ENCODE measurements at regions of chr22 and their contacts with region 1.

Region 1: DNA sequence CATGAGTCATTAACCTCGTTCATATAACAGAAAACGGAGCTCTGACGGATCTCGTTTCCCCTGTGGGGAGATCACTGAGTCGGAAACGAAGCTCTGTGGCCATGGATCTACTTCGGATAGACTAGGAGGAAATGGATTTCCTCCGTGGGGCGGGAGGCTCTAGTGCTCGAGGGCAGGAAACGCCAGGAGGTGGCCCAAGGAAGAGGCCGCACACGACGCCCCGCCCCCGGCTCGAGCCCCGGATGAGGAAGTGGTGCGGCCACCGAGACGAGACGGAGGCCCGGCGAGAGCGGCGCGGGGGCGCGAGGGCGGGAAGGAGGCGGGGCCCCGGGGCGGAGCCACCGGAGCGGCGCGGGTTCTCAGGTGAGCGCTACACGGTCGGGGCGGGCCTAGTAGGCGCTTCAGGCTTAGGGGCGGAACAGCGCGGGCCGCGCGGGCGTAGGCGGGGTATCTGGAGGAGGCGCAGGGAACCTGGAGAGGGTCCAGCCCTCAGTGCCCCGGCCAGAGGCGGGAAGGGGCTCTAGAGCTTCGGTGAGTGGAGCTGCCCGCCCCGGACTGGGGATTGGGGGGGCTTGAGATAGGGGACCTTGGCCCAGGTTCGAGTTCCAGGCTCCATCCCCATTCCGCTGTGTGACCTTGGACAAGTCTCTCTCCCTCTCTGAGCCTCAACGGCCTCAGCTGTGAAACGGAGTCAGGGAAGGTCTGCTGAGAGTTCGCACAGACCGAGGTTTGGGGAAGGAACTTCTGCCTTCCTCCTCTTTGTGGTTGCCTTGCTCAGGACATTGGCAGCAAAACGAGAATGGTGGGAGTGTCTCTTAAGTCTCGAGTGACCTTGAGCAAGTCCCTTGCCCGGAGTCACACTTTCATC is at the start of gene DEPDC5:
- DNase-seq: peak; percentile 99

Region 2: GRCh38 chr22:31676700-31677099 is 77.2 kb before region 1 on chr22:
- CTCF ChIA-PET with region 1: interaction called, 3 read pairs
- POLR2A ChIA-PET with region 1: interaction called, 20 read pairs
- DNase-seq: no peak

Region 3: DNA sequence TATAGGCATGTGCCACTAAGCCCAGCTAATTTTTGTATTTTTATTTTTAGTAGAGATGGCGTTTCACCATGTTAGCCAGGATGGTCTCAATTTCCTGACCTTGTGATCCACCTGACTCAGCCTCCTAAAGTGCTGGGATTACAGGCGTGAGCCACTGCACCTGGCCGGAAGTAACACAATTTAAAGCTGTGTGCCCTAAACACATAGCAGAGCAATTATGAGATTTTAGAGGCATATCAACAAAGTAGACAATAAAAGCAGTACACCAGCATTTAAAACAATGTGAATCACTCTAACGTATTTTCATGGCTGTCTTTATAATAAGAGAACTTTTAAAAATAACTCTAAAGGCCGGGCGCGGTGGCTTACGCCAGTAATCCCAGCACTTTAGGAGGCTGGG is 46.3 kb before region 1 on chr22:
- CTCF ChIA-PET with region 1: no interaction called
- POLR2A ChIA-PET with region 1: no interaction called
- DNase-seq: no peak

Region 4: GRCh38 chr22:31739795-31740201 is 14.1 kb before region 1 on chr22:
- CTCF ChIA-PET with region 1: no interaction called
- POLR2A ChIA-PET with region 1: interaction called, 18 read pairs
- DNase-seq: no peak

Region 5: GRCh38 chr22:31852691-31853421 is 99.0 kb after region 1 on chr22:
- CTCF ChIA-PET with region 1: no interaction called
- POLR2A ChIA-PET with region 1: no interaction called
- DNase-seq: no peak

Region 6: DNA sequence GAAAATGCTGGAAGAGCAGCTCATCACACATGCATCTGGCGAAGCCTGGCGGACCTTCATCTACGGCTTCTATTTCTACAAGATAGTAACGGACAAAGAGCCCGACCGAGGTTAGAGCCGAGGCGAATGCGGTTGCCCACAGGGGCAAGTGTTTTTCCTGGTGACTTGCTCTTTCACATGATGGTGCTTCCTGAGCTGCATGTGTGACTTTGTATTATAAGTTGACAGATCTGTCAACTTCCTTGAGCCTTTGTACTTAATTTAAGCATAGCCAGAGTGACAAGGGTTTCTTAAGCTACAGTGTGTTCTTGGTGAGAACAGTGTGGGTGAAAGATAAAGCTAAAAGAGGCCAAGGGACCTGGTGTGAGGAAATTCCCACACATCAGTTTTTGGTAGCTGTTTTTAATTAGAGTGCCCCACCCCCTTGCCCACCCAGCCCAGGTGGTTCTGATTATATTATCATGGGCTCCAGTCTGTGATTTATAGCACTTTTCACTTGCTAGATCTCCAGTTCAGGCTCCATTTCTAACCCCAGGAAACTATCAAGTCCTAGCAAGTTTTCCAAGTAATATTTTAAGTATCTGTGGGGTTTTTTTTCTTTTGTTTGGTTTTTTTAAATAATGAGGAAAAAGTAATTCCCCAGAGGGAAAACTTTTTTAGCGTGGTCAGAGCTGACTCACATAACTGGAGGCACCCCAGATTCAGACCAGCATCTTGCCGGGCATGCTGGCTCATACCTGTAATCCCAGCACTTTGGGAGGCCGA is 122.5 kb after region 1 on chr22:
- CTCF ChIA-PET with region 1: no interaction called
- POLR2A ChIA-PET with region 1: no interaction called
- DNase-seq: no peak

Region 7: DNA sequence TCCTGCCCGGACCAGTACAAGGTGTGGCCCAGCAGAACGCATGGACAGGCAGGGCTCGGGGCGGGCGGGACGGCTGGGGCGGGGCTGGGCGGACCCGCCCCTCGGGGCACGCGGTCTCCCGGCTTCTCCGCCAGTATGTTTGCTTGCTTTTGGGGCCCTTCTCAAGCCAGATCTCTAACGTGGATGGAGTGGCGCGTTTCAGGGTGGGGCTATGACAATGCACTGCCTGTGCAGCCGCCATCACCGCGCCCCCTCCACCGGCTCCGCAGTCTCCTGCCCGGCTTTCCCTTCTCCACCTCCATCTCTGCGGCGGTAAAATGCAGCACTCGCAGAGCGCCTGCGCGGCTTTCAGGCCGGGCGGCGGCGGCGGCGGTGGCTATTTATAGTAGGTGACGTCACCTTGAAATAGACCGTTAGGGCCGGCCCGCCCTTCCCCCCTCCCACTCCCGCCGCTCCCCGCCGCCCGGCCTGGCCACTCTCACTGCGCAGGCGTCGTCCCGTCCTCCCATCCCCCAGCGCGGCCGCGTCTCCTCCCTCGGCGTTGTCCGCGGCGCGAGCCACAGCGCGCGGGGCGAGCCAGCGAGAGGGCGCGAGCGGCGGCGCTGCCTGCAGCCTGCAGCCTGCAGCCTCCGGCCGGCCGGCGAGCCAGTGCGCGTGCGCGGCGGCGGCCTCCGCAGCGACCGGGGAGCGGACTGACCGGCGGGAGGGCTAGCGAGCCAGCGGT is 190.3 kb after region 1 on chr22 and contains the start of gene YWHAH:
- CTCF ChIA-PET with region 1: no interaction called
- POLR2A ChIA-PET with region 1: interaction called, 33 read pairs
- DNase-seq: peak; percentile 99